Heart right ventricle (tissue), 16 donors: ENCODE measurements at regions of chr6 and their contacts with region 1.

Region 1: DNA sequence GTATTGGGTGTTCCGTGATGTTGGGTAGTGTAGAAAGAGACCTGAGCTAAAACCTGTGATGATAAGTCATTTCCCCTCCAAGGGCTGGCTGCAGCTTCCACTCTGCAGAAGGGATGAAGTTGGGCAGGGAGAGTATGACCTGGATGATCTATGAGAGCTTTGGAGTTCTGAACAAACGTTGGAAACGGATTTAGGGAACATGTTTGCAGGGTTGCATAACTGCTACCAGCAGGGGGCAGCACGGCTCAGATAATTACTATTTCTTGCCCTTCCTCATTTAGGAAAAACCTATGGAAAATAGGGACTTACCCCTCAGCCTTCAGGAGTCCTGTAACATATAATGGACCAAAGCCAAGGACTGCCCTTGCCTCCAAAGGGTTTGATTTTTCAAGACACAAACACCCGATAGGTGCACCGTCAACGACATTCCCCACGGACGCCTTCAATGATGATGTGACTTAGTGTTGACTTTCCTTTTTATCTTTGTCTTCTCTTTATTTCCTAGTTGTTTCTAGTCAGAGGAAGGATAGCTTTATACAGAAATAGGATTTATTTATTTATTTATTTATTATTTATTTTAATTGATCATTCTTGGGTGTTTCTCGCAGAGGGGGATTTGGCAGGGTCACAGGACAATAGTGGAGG is 164.9 kb upstream of the SASH1 start:
- DNase-seq: peak; percentile 71 to 75
- ATAC-seq: peak in 7 of 8 donors; percentile 37 to 68 (median 58)
- H3K4me3 ChIP-seq: no peak overlapping the region
- H3K27ac ChIP-seq: no peak overlapping the region
- H3K4me1 ChIP-seq: no peaks in the 10 kb centered on the region
- H3K27me3 ChIP-seq: no peaks in the 10 kb centered on the region
- CTCF ChIP-seq: peak; percentile 80 to 91 (median 86)

Region 2: DNA sequence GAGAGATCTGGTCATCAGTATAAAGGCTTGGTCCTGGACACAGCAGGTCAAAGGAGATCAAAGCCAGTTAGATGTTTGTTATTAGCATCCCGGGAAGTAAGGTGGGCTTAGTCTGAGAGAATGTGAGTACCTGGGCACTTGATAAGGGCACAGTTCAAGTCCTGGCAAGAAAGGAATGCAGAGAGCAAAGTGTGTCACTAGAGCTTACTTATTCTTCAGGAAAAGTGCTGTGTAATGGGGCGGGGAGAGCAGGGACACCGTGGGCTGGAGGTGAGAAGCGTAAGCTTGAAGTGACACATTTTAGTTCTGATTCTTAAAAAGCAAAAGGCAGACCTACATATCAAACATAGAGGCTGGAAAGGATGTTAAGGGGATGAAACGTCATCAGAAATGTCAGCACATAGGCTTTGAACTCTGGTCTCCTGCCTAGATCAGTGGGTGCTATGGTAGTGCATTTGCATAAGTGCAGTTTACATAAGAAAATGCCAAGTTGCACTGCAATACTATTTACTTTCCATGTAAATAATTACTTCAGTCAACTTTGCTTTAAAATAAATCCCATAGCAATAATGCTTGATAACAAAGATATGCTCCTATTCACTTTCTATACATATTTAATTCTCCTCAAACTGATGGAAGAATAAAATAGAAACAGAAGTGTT is 666.7 kb before region 1 on chr6:
- intact Hi-C with region 1: no loop called
- DNase-seq: no peak
- ATAC-seq: no peak
- H3K4me3 ChIP-seq: no peak overlapping the region
- H3K27ac ChIP-seq: no peak overlapping the region
- H3K4me1 ChIP-seq: peaks cover 0 to 33% (median 16%) of the 10 kb centered on the region in 9 donors
- H3K27me3 ChIP-seq: peaks cover 0 to 64% (median 11%) of the 10 kb centered on the region in 7 donors
- CTCF ChIP-seq: no peak

Region 3: DNA sequence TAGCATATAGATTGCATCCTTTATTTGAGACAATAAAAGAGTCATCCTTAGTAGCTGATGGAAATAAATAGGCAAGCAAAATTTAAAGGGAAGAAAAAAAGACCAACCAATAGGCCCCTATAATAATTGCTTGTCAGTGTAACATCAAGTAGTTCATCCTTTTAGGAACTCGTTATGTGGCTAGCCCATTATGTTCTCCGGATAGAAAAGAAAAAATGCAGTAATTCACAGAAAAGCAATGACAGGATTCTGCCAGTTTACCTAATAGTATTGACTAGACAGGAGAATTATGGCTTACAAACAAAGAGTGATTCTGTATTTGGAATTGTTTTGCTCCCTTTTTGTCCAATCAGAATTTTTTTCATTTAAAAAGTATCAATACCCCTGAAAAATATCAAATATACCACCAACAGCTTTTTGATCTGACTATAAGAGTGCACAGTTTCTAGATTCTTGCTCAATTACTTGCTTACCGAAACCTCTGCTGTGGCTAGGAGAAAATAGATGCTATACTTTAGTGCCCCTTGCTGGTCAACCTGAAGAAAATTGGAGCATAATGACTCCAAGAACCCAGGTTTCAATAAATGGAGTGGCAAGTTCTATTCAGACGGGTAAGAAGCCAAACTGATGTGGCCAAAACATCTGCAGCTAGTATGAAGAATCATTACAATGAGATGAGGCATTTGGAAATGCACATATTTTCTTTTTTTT is 73.4 kb after region 1 on chr6:
- intact Hi-C with region 1: loop called in 7 of 10 experiments (anchors 1 to 5 kb)
- DNase-seq: no peak
- ATAC-seq: peak in 6 of 8 donors; percentile 69 to 85 (median 80)
- H3K4me3 ChIP-seq: no peak overlapping the region
- H3K27ac ChIP-seq: peak overlapping the region in 3 of 10 donors; percentile 6 to 50 (median 9)
- H3K4me1 ChIP-seq: peaks cover 0 to 18% (median 4%) of the 10 kb centered on the region in 9 donors
- H3K27me3 ChIP-seq: no peaks in the 10 kb centered on the region
- CTCF ChIP-seq: peak in 8 of 9 donors; percentile 17 to 60 (median 50)

Region 4: GRCh38 chr6:148263010-148263409 is 85.3 kb after region 1 on chr6:
- intact Hi-C with region 1: loop called in 1 of 10 experiments (anchors 5 kb)
- DNase-seq: no peak
- ATAC-seq: no peak
- H3K4me3 ChIP-seq: no peak overlapping the region
- H3K27ac ChIP-seq: no peak overlapping the region
- H3K4me1 ChIP-seq: peaks cover 0 to 6% (median 0%) of the 10 kb centered on the region in 9 donors
- H3K27me3 ChIP-seq: no peaks in the 10 kb centered on the region
- CTCF ChIP-seq: no peak

Region 5: GRCh38 chr6:148329596-148330381 is 152.1 kb after region 1 on chr6:
- intact Hi-C with region 1: loop called in 1 of 10 experiments (anchors 10 kb)
- DNase-seq: no peak
- ATAC-seq: peak in 4 of 8 donors; percentile 9 to 58 (median 24)
- H3K4me3 ChIP-seq: no peak overlapping the region
- H3K27ac ChIP-seq: peak overlapping the region in 8 of 10 donors; percentile 36 to 71 (median 54)
- H3K4me1 ChIP-seq: peaks cover 7 to 36% (median 23%) of the 10 kb centered on the region in 9 donors
- H3K27me3 ChIP-seq: no peaks in the 10 kb centered on the region
- CTCF ChIP-seq: no peak

Region 6: GRCh38 chr6:148342357-148343046 is 164.8 kb after region 1 on chr6 and contains the start of gene SASH1:
- intact Hi-C with region 1: loop called in 1 of 10 experiments (anchors 10 kb)
- DNase-seq: peak; percentile 70 to 71
- ATAC-seq: peak; percentile 71 to 91 (median 84)
- H3K4me3 ChIP-seq: peak within 1 kb of the TSS; percentile 68 to 88 (median 76)
- H3K27ac ChIP-seq: peak within 1 kb of the TSS; percentile 86 to 98 (median 92)
- H3K4me1 ChIP-seq: peaks cover 0 to 57% (median 38%) of the 10 kb centered on the region in 9 donors
- H3K27me3 ChIP-seq: peaks cover 0 to 31% (median 0%) of the 10 kb centered on the region in 7 donors
- CTCF ChIP-seq: no peak
- total RNA-seq, gene SASH1: 19.0 to 47.1 (median 27.1) TPM

Region 7: DNA sequence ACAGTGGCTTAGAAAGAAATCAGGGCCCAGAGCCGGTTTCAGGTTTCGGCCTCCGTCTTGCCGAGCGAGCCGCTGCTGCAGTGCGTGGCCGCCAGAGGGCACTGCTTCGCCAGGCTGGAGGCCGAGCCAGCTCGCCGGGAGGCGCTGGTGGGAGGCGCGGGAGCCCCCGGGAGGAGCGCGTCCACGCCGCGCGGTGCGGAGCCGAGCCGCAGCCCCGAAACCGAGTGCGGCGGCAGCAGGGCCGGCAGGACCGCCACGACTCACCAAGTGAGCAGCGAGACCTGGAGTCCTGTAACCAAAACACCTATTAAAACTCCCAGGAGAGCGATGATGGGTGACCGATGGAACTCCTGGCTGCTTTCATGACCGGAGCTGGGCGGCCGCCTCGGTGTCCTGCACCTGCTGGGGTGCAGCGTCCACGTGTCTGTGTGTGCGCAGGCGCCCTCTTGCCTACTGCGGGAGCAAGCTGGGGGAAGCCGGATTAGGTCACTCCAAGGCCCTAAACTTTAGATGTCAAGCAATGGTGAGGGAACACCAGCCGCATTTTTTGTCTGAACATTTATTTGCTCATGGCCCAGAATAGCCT is 382.2 kb after region 1 on chr6:
- intact Hi-C with region 1: loop called in 1 of 10 experiments (anchors 5 kb)
- DNase-seq: peak; percentile 63 to 83
- ATAC-seq: peak; percentile 81 to 90 (median 86)
- H3K4me3 ChIP-seq: peak overlapping the region; percentile 13 to 59 (median 53)
- H3K27ac ChIP-seq: peak overlapping the region in 2 of 10 donors; percentile 8 to 52
- H3K4me1 ChIP-seq: peaks cover 0 to 19% (median 4%) of the 10 kb centered on the region in 9 donors
- H3K27me3 ChIP-seq: no peaks in the 10 kb centered on the region
- CTCF ChIP-seq: peak; percentile 96 to 99 (median 99)